Dorsolateral prefrontal cortex (tissue), 120 donors: ENCODE measurements at regions of chr11 and their contacts with region 1.

Region 1: DNA sequence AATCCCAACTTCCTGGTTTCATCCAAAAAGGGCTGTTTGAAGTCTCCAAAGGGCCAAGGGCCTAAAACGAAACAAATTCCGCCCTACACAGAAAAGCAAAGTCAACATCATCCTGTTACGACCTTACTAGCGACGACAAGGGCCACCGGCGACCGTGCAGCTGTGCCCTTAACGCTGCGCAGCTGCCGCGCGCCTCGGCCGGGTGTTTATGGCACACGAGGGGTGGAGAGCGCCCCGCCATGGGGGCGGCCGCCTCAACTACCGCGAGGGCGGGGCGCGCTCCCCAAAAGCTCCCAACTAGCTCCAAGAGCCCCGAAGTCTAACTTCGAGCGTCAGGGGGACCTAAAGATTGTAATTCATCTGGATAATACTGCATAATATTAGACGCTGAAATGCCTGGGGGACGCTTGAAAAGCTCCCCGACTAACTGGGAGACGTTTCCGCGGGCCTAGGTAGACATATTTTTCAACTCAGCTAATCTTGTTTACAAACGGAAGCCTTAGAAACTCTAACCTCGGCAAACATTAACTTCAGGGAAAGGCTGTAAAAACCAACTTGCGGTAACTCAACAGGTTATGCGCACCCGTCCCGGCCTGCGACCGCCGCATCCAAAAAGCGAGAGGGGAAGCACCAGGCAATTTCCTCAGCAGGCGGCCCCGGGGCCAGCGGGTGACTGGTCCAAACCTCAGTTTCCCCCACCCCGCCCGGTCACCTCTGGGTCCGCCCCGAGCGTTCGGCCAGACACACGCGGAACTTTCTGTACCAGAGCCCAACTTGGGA is 694 bp downstream of the TMEM123 start:
- DNase-seq: peak; percentile 8 to 77 (median 62)
- H3K4me3 ChIP-seq: peak overlapping the region; percentile 66 to 97 (median 82)
- H3K27ac ChIP-seq: peak overlapping the region; percentile 45 to 99 (median 92)
- H3K27me3 ChIP-seq: peaks cover 0 to 6% (median 0%) of the 10 kb centered on the region in 45 donors
- CTCF ChIP-seq: peak in 51 of 56 donors; percentile 13 to 65 (median 41)

Region 2: DNA sequence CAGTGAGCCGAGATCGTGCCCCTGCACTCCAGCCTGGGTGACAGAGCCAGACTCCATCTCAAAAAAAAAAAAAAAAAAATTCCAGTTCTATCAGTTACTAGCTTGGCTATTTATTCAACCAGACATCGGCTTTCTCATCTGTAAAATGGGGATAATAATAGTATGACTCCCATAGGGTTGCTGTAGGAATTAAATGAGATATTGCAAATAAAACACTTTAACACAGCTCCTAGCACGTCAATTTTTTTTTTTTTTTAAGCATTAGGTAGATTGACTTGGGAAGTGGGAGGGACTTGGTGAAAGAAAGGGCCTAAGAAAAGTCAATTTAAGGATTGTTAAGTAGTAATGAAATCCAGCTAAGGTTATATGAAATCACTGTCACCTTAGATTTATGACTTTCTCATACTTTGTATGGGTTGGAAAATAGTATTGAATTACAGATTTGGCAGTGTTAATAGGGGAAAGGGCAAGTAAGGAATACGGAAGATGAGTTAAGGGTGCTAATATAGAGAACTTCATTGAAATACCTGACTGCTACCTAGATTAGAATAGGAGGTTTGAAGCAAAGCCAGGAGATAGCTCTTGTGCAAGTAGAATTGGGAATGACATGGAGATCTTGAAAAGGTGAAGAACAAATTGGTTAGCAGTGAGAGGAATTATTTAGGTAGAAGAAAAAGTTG is 76.0 kb before region 1 on chr11:
- intact Hi-C with region 1: no loop called
- DNase-seq: no peak
- H3K4me3 ChIP-seq: no peak overlapping the region
- H3K27ac ChIP-seq: no peak overlapping the region
- H3K27me3 ChIP-seq: no peaks in the 10 kb centered on the region
- CTCF ChIP-seq: no peak

Region 3: DNA sequence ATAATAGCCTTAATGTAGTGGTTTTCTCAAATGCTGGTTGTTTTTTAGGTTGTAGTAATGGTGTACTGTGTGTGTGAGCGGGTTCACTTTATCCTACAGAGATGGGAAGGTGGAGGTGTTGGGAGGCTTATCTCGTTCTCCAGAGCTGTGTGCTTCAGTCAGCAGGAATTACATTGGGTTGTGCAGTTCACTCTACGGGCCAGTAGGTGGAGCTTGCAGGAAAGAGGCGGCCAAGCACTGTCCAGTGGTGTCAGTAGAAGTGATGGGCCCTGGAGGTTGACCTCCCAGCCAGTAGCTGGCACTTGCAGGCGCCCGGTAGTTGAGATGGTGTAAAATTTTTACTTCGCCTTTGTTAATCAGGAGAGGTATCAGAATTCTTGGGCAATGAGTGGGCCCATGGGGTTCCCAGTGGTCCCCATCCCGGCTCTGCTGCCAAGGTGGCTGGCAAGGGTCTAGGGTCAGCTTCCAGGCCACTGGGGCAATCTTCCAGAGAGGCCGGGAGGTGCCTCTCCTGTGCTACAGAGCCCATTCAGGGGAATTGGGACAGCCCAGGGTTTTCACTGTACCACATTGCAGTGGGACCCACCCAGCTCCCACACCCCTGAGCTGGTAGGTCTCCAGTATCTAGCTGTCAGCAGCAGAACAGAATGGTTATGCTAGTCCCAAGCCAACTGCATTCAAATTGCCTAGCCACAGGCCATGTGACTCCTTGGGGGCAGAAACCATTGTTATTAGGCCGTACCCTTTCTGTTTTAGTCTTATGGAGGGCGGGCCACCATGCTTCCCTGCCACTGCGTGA is 61.0 kb before region 1 on chr11:
- intact Hi-C with region 1: loop called in 1 of 2 experiments (anchors 5 kb)
- DNase-seq: peak; percentile 8 to 82 (median 68)
- H3K4me3 ChIP-seq: no peak overlapping the region
- H3K27ac ChIP-seq: peak overlapping the region in 39 of 59 donors; percentile 5 to 76 (median 40)
- H3K27me3 ChIP-seq: no peaks in the 10 kb centered on the region
- CTCF ChIP-seq: peak; percentile 69 to 96 (median 88)

Region 4: GRCh38 chr11:102410382-102410784 is 41.5 kb before region 1 on chr11:
- intact Hi-C with region 1: loop called in 1 of 2 experiments (anchors 5 kb)
- DNase-seq: no peak
- H3K4me3 ChIP-seq: no peak overlapping the region
- H3K27ac ChIP-seq: peak overlapping the region in 35 of 59 donors; percentile 3 to 78 (median 57)
- H3K27me3 ChIP-seq: no peaks in the 10 kb centered on the region
- CTCF ChIP-seq: no peak

Region 5: DNA sequence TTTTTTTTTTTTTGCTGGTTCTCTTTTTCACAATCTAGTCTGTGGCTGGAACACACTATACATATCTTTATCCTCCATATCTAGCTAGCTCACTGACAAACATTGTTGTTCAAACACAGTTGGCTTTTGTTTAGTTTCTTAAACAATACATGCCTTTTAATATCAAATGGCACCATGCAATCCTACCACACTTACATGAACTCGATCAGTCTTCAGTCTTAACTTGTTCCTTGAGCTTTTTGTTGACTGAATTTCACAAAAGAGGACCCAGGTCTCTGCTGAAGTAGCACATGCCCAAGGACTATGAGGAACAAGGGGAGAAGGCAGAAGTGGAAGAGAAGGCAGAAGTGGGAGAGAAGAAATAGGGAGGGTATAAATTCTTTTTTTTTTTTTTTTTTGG is 24.8 kb before region 1 on chr11:
- intact Hi-C with region 1: loop called in 1 of 2 experiments (anchors 2 kb)
- DNase-seq: no peak
- H3K4me3 ChIP-seq: peak overlapping the region in 14 of 59 donors; percentile 1 to 31 (median 14)
- H3K27ac ChIP-seq: peak overlapping the region in 58 of 59 donors; percentile 45 to 98 (median 92)
- H3K27me3 ChIP-seq: no peaks in the 10 kb centered on the region
- CTCF ChIP-seq: no peak

Region 6: DNA sequence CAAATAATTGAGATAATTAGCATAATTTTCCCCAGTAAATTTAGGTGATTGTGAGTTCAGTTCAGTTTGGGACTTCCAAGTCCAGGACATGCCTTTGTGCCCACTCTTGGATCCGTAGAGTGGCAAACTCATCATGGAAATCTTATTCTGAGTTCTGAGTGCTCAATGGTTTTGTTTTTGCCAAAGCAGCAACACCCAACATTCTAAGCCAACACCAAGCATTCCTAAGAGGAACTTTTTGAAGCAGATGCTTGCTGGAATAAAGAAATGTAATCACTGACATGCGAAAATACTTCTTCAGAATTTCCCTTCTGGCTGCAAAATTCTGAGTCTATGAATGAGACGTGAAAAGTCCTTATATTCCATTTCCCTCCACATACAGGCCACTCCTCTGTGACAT is 243.3 kb after region 1 on chr11:
- intact Hi-C with region 1: no loop called
- DNase-seq: no peak
- H3K4me3 ChIP-seq: no peak overlapping the region
- H3K27ac ChIP-seq: no peak overlapping the region
- H3K27me3 ChIP-seq: peaks cover 0 to 8% (median 0%) of the 10 kb centered on the region in 45 donors
- CTCF ChIP-seq: no peak